ENCODE measurements at regions of chr13 and their contacts with region 1.

Region 1: GRCh38 chr13:36453516-36453915 is 21.2 kb downstream of the CCNA1 start:
- DNase-seq: peak; percentile 49
- H3K4me3 ChIP-seq: no peak overlapping the region
- H3K27ac ChIP-seq: no peak overlapping the region
- H3K4me1 ChIP-seq: no peaks in the 10 kb centered on the region
- H3K27me3 ChIP-seq: peaks cover 0 to 4% of the 10 kb centered on the region in 2 experiments
- CTCF ChIP-seq: peak; percentile 29 to 41
- POLR2A ChIP-seq: no peak

Region 2: GRCh38 chr13:36420437-36420891 is 33.1 kb before region 1 on chr13:
- CTCF ChIA-PET with region 1: interaction called, 15 read pairs
- POLR2A ChIA-PET with region 1: no interaction called
- dilution Hi-C with region 1: no loop called
- intact Hi-C with region 1: loop called (anchors 1 kb)
- DNase-seq: peak; percentile 84
- H3K4me3 ChIP-seq: no peak overlapping the region
- H3K27ac ChIP-seq: no peak overlapping the region
- H3K4me1 ChIP-seq: peaks cover 32% of the 10 kb centered on the region
- H3K27me3 ChIP-seq: no peaks in the 10 kb centered on the region
- CTCF ChIP-seq: peak; percentile 86 to 91
- POLR2A ChIP-seq: no peak

Region 3: GRCh38 chr13:36712770-36713169 is 259.3 kb after region 1 on chr13:
- CTCF ChIA-PET with region 1: interaction called, 10 read pairs
- POLR2A ChIA-PET with region 1: no interaction called
- dilution Hi-C with region 1: no loop called
- intact Hi-C with region 1: no loop called
- DNase-seq: no peak
- H3K4me3 ChIP-seq: no peak overlapping the region
- H3K27ac ChIP-seq: no peak overlapping the region
- H3K4me1 ChIP-seq: peaks cover under 1% of the 10 kb centered on the region
- H3K27me3 ChIP-seq: peaks cover 12 to 15% of the 10 kb centered on the region in 2 experiments
- CTCF ChIP-seq: no peak
- POLR2A ChIP-seq: no peak

Region 4: GRCh38 chr13:36724141-36724540 is 270.6 kb after region 1 on chr13:
- CTCF ChIA-PET with region 1: interaction called, 10 read pairs
- POLR2A ChIA-PET with region 1: no interaction called
- dilution Hi-C with region 1: no loop called
- intact Hi-C with region 1: no loop called
- DNase-seq: no peak
- H3K4me3 ChIP-seq: no peak overlapping the region
- H3K27ac ChIP-seq: no peak overlapping the region
- H3K4me1 ChIP-seq: no peaks in the 10 kb centered on the region
- H3K27me3 ChIP-seq: peaks cover 6 to 8% of the 10 kb centered on the region in 2 experiments
- CTCF ChIP-seq: no peak
- POLR2A ChIP-seq: no peak

Region 5: DNA sequence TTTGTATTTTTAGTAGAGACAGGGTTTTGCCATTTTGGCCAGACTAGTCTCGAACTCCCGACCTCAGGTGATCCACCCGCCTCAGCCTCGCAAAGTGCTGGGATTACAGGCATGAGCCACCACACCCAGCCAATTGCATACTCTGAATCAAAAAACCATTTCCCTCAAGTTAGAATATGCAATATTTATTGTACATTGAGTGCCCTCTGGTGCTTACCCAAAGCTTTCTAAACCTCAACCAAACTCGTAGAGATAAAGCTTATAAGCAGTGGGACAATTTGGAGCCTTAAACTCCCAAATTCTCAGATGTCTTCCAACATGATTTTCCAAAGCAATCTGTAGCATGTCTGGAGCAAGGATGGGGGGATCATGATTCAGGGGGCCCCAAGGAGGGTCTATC is 387.9 kb after region 1 on chr13:
- CTCF ChIA-PET with region 1: interaction called, 15 read pairs
- POLR2A ChIA-PET with region 1: no interaction called
- dilution Hi-C with region 1: no loop called
- intact Hi-C with region 1: no loop called
- DNase-seq: no peak
- H3K4me3 ChIP-seq: no peak overlapping the region
- H3K27ac ChIP-seq: no peak overlapping the region
- H3K4me1 ChIP-seq: no peaks in the 10 kb centered on the region
- H3K27me3 ChIP-seq: no peaks in the 10 kb centered on the region
- CTCF ChIP-seq: no peak
- POLR2A ChIP-seq: no peak